Activated T-helper 2 cell treated with anti-CD3 and anti-CD28 coated beads, Interferon-gamma antibody, Interleukin-2, Interleukin-4, amounts not matched to agents 10 μg/mL and 5 μg/mL and 100 μg/mL, durations not matched to agents 14 hours and 24 hours and 36 hours (primary cell): ENCODE measurements at regions of chr2 and their contacts with region 1.

Region 1: GRCh38 chr2:45851613-45852304 is 200.3 kb downstream of the PRKCE start:
- DNase-seq: no peak
- H3K4me3 Mint-ChIP-seq: no peak overlapping the region
- H3K27ac Mint-ChIP-seq: no peak overlapping the region
- H3K4me1 Mint-ChIP-seq: peaks cover 38% of the 10 kb centered on the region
- H3K27me3 Mint-ChIP-seq: no peaks in the 10 kb centered on the region

Region 2: DNA sequence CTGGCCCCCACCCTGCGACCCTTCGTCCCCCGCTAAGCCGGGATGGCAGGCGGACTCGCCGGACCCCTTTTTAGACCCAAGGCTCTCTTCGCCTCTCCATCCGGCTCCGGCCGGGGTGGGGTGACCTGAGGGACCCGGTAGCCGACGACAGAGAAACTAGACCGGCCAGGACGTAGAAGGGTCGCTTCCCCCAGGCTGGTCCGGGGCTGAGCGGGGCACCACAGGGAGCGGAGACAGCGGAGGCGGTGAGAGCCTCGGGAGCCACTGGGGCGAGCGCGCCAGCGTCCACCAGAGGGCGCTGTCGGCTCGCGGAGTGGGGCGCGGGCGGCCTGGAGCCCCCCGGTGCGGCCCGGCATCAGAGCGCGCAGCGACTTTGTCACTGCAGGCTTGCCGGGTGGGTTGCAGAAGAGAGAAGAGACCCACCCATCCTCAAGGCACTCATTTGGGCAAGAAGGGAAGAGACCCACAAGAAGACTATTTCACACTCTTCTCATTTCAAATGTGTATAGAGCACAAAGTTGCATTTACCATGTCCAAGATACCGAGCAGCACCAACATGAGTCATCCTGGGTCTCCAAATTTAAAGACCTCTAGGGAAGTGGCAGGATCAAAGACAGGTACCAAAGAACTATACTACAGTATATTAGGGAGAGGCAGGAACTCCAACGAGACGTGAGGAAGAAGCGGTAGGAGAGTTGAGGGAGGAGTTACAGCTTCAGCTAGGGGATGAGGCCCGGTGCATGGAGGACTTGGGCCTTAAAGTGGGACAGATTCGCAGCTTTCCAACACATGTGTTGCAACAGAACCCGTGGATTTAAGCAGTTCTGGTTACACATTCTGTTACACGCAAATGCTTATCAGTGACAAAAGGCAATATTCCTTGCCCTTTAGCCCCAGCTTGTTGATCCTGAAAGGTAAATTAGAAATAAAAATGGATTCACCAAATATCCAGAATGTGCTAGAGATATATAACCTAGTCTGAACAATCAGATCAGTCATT is 207.9 kb before region 1 on chr2:
- intact Hi-C with region 1: loop called (anchors 10 kb)
- DNase-seq: peak; percentile 59
- H3K4me3 Mint-ChIP-seq: peak overlapping the region; percentile 67
- H3K27ac Mint-ChIP-seq: no peak overlapping the region
- H3K4me1 Mint-ChIP-seq: peaks cover 15% of the 10 kb centered on the region
- H3K27me3 Mint-ChIP-seq: peaks cover 38% of the 10 kb centered on the region

Region 3: GRCh38 chr2:45778720-45779171 is 73.0 kb before region 1 on chr2:
- intact Hi-C with region 1: loop called (anchors 10 kb)
- DNase-seq: peak; percentile 41
- H3K4me3 Mint-ChIP-seq: no peak overlapping the region
- H3K27ac Mint-ChIP-seq: no peak overlapping the region
- H3K4me1 Mint-ChIP-seq: peaks cover 14% of the 10 kb centered on the region
- H3K27me3 Mint-ChIP-seq: no peaks in the 10 kb centered on the region

Region 4: GRCh38 chr2:45862843-45863242 is 11.1 kb after region 1 on chr2:
- intact Hi-C with region 1: loop called (anchors 1 kb)
- DNase-seq: no peak
- H3K4me3 Mint-ChIP-seq: no peak overlapping the region
- H3K27ac Mint-ChIP-seq: peak overlapping the region; percentile 62
- H3K4me1 Mint-ChIP-seq: peaks cover 51% of the 10 kb centered on the region
- H3K27me3 Mint-ChIP-seq: no peaks in the 10 kb centered on the region

Region 5: GRCh38 chr2:45889053-45889452 is 37.3 kb after region 1 on chr2:
- intact Hi-C with region 1: loop called (anchors 5 kb)
- DNase-seq: peak; percentile 20
- H3K4me3 Mint-ChIP-seq: no peak overlapping the region
- H3K27ac Mint-ChIP-seq: no peak overlapping the region
- H3K4me1 Mint-ChIP-seq: peaks cover 38% of the 10 kb centered on the region
- H3K27me3 Mint-ChIP-seq: no peaks in the 10 kb centered on the region